ENCODE measurements at regions of chr21 and their contacts with region 1.

Region 1: GRCh38 chr21:39114871-39115575 is 68.2 kb downstream of the PSMG1 start:
- DNase-seq: peak; percentile 74
- ATAC-seq: peak; percentile 81
- H3K4me3 ChIP-seq: no peak overlapping the region
- H3K27ac ChIP-seq: peak overlapping the region; percentile 10
- H3K4me1 ChIP-seq: peaks cover 16% of the 10 kb centered on the region
- H3K27me3 ChIP-seq: no peaks in the 10 kb centered on the region
- CTCF ChIP-seq: no peak
- POLR2A ChIP-seq: no peak
- RAD21 ChIP-seq: no peak; the same call in 1 of the 2 replicates

Region 2: GRCh38 chr21:39079617-39080016 is 35.4 kb before region 1 on chr21:
- CTCF ChIA-PET with region 1: interaction called, 3 read pairs
- POLR2A ChIA-PET with region 1: no interaction called
- dilution Hi-C with region 1: no loop called
- in situ Hi-C with region 1: no loop called
- intact Hi-C with region 1: loop called (anchors 5 kb)
- DNase-seq: peak; percentile 33
- ATAC-seq: no peak
- H3K4me3 ChIP-seq: no peak overlapping the region
- H3K27ac ChIP-seq: no peak overlapping the region
- H3K4me1 ChIP-seq: peaks cover 4% of the 10 kb centered on the region; the same call in 1 of the 2 replicates
- H3K27me3 ChIP-seq: peaks cover 3% of the 10 kb centered on the region; the same call in 1 of the 2 replicates
- CTCF ChIP-seq: no peak
- POLR2A ChIP-seq: no peak
- RAD21 ChIP-seq: no peak

Region 3: DNA sequence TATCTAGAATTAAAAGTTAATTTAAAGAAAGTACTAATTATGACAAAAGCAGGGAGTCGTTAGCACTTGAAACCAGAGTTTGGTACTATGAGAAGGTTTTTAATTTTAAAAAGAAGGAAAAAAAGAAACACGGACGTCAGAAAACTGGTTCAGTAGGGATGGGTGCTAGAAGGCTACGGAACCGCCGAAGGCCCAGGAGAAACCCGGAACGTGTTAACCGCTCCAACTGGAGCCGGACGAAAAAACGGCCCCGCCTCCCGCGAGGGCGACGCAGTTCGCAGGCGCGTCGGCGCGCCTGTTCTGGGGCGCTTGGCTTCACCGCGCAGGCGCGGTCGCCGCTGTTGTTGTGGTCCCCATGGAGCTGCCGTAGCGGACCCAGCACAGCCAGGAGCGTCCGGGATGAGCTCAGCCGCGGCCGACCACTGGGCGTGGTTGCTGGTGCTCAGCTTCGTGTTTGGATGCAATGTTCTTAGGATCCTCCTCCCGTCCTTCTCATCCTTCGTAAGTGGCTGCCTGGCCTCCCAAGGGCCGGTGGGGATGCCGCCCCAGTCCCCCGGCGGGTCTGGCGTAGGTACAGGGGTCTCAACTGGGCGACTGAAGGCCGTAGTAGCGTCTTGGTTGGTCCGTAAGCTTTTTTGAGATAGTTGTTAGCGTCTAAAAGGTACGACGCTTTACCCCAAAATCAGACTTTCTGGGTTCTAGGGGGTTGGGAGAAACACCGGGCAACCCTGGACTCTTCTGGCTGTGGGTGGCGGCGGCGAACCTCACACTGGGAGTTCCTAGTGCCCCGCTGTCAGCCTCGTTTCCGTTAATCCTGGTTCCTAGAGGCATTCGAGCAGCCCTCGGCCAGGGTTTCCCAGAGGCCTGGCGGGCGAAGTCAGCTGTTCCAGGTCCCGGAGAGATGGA is 265.2 kb after region 1 on chr21:
- CTCF ChIA-PET with region 1: no interaction called
- POLR2A ChIA-PET with region 1: no interaction called
- dilution Hi-C with region 1: no loop called
- in situ Hi-C with region 1: no loop called
- intact Hi-C with region 1: no loop called
- DNase-seq: peak; percentile 96
- ATAC-seq: peak; percentile 99
- H3K4me3 ChIP-seq: peak overlapping the region; percentile 71
- H3K27ac ChIP-seq: peak overlapping the region; percentile 72
- H3K4me1 ChIP-seq: peaks cover 4% of the 10 kb centered on the region; the same call in 1 of the 2 replicates
- H3K27me3 ChIP-seq: no peaks in the 10 kb centered on the region
- CTCF ChIP-seq: no peak
- POLR2A ChIP-seq: peak; percentile 92
- RAD21 ChIP-seq: no peak